Activated naive CD4-positive, alpha-beta T cell treated with anti-CD3 and anti-CD28 coated beads for 36 hours (primary cell): ENCODE measurements at regions of chr3 and their contacts with region 1.

Region 1: DNA sequence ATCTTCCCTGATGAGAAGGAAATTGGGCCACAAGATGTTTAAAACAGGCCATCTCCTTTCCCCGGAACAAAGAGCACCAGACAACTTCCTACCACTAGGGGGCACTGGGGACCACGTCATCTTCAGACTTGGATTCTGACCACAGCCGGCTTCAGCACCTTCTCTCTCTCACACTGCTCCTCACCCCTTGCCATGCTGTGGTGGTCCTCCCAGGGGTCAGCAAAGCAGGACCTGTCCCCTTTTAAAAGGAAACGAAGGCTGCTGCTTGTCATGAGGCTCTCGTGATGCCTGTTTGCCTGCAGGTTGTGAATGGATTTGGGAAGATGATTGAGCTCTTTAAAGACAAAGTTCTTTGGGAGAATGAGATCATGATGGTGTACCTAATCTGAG is 16.2 kb downstream of the RFT1 start:
- DNase-seq: peak; percentile 91
- H3K4me3 Mint-ChIP-seq: no peak overlapping the region
- H3K27ac Mint-ChIP-seq: no peak overlapping the region
- H3K4me1 Mint-ChIP-seq: peaks cover 16% of the 10 kb centered on the region
- H3K27me3 Mint-ChIP-seq: no peaks in the 10 kb centered on the region

Region 2: GRCh38 chr3:53045518-53046170 is 68.4 kb before region 1 on chr3 and contains the start of gene SFMBT1:
- CTCF ChIA-PET with region 1: interaction called, 3 read pairs
- intact Hi-C with region 1: loop called (anchors 2 kb)
- DNase-seq: peak; percentile 68
- H3K4me3 Mint-ChIP-seq: peak within 1 kb of the TSS; percentile 90
- H3K27ac Mint-ChIP-seq: peak within 1 kb of the TSS; percentile 90
- H3K4me1 Mint-ChIP-seq: peaks cover 42% of the 10 kb centered on the region
- H3K27me3 Mint-ChIP-seq: no peaks in the 10 kb centered on the region
- total RNA-seq, gene SFMBT1: 15.1 to 15.4 TPM

Region 3: DNA sequence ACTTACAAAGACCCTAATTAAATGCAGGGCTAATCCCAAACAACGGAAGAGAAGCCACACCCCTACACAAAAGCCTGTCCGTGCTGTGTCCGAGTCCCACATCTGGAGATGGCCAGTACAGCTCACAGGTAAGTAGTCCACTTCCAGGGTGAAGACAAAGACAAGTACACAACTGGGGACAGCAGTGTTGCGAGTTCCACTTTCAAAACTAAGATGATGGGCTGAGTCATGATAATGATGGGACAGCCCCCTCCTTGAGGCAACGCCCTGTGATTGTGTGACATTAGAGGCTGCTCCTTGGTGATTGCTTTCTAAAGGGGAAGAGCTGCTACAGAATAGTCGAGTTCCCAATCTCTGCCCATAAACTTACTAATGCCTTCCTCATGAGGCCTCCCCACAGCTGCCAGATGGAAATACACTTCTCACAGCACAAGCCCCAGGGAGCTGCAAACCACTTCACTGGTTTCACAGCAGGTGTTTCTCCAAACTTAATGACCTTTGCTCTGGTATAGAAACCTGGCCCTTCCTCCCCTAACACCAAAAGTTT is 11.3 kb before region 1 on chr3:
- CTCF ChIA-PET with region 1: interaction called, 19 read pairs
- intact Hi-C with region 1: loop called (anchors 1 kb)
- DNase-seq: peak; percentile 84
- H3K4me3 Mint-ChIP-seq: peak overlapping the region; percentile 11
- H3K27ac Mint-ChIP-seq: peak overlapping the region; percentile 80
- H3K4me1 Mint-ChIP-seq: peaks cover 68% of the 10 kb centered on the region
- H3K27me3 Mint-ChIP-seq: no peaks in the 10 kb centered on the region

Region 4: DNA sequence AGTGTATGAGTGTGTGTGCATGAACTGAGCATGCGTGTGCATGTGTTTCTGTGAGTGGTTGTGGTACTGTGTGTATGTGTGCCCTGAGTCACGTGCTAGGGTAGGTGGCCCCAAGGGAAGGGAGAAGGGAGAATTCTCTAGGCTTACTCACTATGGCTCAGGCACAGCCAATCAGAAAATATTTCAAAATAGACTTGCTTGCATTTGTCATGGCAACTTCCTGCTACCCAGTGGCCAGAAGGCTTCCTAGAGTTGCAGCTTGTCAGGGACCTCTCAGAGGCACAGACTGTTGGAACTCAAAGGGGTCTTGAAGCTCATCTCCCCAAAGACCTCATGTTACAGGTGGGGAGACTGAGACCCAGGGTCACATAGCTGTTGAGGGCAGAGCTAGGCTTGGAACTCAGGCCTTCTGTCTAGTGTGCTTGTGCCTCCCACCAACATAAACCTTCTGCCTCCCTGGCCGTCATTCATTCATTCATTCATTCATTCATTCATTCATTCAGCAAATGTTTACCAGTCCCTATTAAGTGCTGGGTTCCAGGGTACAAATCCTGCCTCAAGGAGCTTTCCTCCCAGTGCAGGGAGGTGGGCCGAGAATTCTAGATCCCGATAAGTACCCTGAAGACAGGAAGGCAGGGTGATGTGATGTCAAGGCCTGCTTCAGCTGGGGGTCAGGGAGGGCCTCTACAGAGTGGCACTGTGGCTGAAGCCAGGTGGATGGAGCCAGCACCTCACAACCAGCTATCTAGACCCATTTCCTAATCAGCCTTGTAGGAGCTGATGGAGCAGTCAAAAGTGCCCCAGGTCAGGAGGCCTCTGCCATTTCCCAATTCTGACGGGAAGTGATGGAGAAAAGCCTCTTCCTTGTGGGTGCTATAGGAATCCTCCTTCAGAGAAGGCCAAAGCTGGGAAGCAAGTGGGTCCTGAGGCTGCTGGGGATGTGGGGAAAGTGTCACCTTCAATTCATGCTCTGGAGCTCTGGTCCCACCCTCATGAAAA is 27.1 kb after region 1 on chr3:
- CTCF ChIA-PET with region 1: interaction called, 10 read pairs
- intact Hi-C with region 1: no loop called
- DNase-seq: peak; percentile 30
- H3K4me3 Mint-ChIP-seq: no peak overlapping the region
- H3K27ac Mint-ChIP-seq: no peak overlapping the region
- H3K4me1 Mint-ChIP-seq: no peaks in the 10 kb centered on the region
- H3K27me3 Mint-ChIP-seq: no peaks in the 10 kb centered on the region

Region 5: GRCh38 chr3:53219895-53220483 is 106.0 kb after region 1 on chr3:
- CTCF ChIA-PET with region 1: no interaction called
- intact Hi-C with region 1: loop called (anchors 1 kb)
- DNase-seq: peak; percentile 91
- H3K4me3 Mint-ChIP-seq: no peak overlapping the region
- H3K27ac Mint-ChIP-seq: no peak overlapping the region
- H3K4me1 Mint-ChIP-seq: peaks cover 1% of the 10 kb centered on the region
- H3K27me3 Mint-ChIP-seq: no peaks in the 10 kb centered on the region

Region 6: GRCh38 chr3:53493963-53494791 is 380.2 kb after region 1 on chr3 and contains the start of gene CACNA1D:
- CTCF ChIA-PET with region 1: no interaction called
- intact Hi-C with region 1: loop called (anchors 10 kb)
- DNase-seq: no peak
- H3K4me3 Mint-ChIP-seq: peak within 1 kb of the TSS; percentile 49
- H3K27ac Mint-ChIP-seq: no peak within 1 kb of the TSS
- H3K4me1 Mint-ChIP-seq: peaks cover 7% of the 10 kb centered on the region
- H3K27me3 Mint-ChIP-seq: peaks cover 50% of the 10 kb centered on the region
- total RNA-seq, gene CACNA1D: not detected